ENCODE measurements at regions of chr15 and their contacts with region 1.

Region 1: GRCh38 chr15:77543159-77543882 is 89.4 kb downstream of the LINGO1 start:
- DNase-seq: peak; percentile 80
- H3K4me3 ChIP-seq: peak overlapping the region in 2 of 3 experiments; percentile 24 to 25
- H3K27ac ChIP-seq: peak overlapping the region; percentile 39
- H3K4me1 ChIP-seq: peaks cover 12% of the 10 kb centered on the region
- H3K27me3 ChIP-seq: no peaks in the 10 kb centered on the region
- CTCF ChIP-seq: peak; percentile 97 to 98
- POLR2A ChIP-seq: no peak

Region 2: DNA sequence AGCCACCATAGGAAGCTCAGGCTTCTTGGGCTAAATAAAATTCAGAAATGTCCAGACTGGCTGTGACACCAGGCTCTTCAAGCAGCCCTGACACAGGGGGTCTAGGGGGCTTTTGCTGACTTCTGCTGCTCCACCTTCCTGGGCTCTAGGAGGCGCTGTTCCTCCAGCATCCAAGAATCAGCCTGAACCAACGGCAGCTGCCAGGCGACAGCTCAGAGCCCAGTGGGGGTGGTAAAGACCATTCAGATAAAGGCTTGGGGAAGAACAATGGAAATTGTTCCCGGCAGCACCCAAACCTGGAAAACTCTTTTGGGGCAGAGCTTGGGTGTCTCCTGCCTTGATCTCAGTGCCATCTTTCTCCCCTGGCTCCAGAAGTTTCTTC is 570.0 kb before region 1 on chr15:
- CTCF ChIA-PET with region 1: interaction called, 24 read pairs
- POLR2A ChIA-PET with region 1: no interaction called
- dilution Hi-C with region 1: no loop called
- intact Hi-C with region 1: loop called (anchors 5 kb)
- DNase-seq: peak; percentile 56
- H3K4me3 ChIP-seq: no peak overlapping the region
- H3K27ac ChIP-seq: no peak overlapping the region
- H3K4me1 ChIP-seq: peaks cover 11% of the 10 kb centered on the region
- H3K27me3 ChIP-seq: peaks cover 0 to 2% of the 10 kb centered on the region in 2 experiments
- CTCF ChIP-seq: peak; percentile 78
- POLR2A ChIP-seq: no peak

Region 3: GRCh38 chr15:77070495-77071304 is 472.6 kb before region 1 on chr15 and contains the start of gene TSPAN3:
- CTCF ChIA-PET with region 1: interaction called, 10 read pairs
- POLR2A ChIA-PET with region 1: no interaction called
- dilution Hi-C with region 1: no loop called
- intact Hi-C with region 1: no loop called
- DNase-seq: peak; percentile 96
- H3K4me3 ChIP-seq: peak within 1 kb of the TSS; percentile 53 to 98 (median 90)
- H3K27ac ChIP-seq: peak within 1 kb of the TSS; percentile 81
- H3K4me1 ChIP-seq: peaks cover 35% of the 10 kb centered on the region
- H3K27me3 ChIP-seq: peaks cover 4% of the 10 kb centered on the region in 2 experiments
- CTCF ChIP-seq: no peak
- POLR2A ChIP-seq: peak; percentile 70
- total RNA-seq, gene TSPAN3: 202 and 215 TPM in 2 replicates

Region 4: DNA sequence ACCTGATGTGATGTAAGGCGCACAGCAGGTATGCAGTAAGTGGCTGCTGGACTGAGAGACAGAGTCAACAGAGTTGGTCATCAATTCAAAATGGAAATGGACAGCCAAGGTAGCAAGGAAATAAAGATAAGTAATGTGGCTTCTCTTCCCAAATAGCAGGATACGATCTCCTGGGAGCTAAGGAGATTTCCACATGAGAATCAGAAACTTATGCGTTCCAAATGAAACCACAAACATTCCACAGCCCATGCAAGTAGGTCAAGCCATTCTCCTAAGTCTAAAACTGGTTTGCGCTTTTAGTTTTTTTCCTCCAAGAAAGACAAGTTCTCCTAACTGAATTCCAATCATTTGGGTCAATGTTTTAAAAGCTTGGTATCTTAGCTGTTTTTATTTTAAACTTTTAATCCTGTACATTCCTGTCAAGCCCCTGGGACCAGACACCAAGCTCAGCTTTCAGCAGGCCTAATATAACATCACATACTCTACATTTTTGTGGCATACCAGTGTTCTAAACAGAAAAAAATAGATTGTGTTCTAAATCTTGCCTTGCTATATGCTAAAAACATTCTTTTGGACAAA is 398.7 kb before region 1 on chr15:
- CTCF ChIA-PET with region 1: interaction called, 11 read pairs
- POLR2A ChIA-PET with region 1: no interaction called
- dilution Hi-C with region 1: no loop called
- intact Hi-C with region 1: no loop called
- DNase-seq: no peak
- H3K4me3 ChIP-seq: no peak overlapping the region
- H3K27ac ChIP-seq: peak overlapping the region; percentile 45
- H3K4me1 ChIP-seq: peaks cover 19% of the 10 kb centered on the region
- H3K27me3 ChIP-seq: no peaks in the 10 kb centered on the region
- CTCF ChIP-seq: no peak
- POLR2A ChIP-seq: no peak

Region 5: GRCh38 chr15:77224352-77224751 is 319.0 kb before region 1 on chr15:
- CTCF ChIA-PET with region 1: interaction called, 11 read pairs
- POLR2A ChIA-PET with region 1: no interaction called
- dilution Hi-C with region 1: no loop called
- intact Hi-C with region 1: no loop called
- DNase-seq: peak; percentile 72
- H3K4me3 ChIP-seq: peak overlapping the region in 1 of 3 experiments; percentile 18
- H3K27ac ChIP-seq: peak overlapping the region; percentile 44
- H3K4me1 ChIP-seq: peaks cover 35% of the 10 kb centered on the region
- H3K27me3 ChIP-seq: no peaks in the 10 kb centered on the region
- CTCF ChIP-seq: no peak
- POLR2A ChIP-seq: peak; percentile 22

Region 6: GRCh38 chr15:77496710-77497103 is 46.6 kb before region 1 on chr15:
- CTCF ChIA-PET with region 1: interaction called, 90 read pairs
- POLR2A ChIA-PET with region 1: interaction called, 3 read pairs
- dilution Hi-C with region 1: no loop called
- intact Hi-C with region 1: loop called (anchors 1 kb)
- DNase-seq: peak; percentile 82
- H3K4me3 ChIP-seq: no peak overlapping the region
- H3K27ac ChIP-seq: peak overlapping the region; percentile 94
- H3K4me1 ChIP-seq: peaks cover 53% of the 10 kb centered on the region
- H3K27me3 ChIP-seq: no peaks in the 10 kb centered on the region
- CTCF ChIP-seq: peak; percentile 94 to 97
- POLR2A ChIP-seq: no peak